AG04449 (cell line): ENCODE measurements at regions of chr1 and their contacts with region 1.

Region 1: DNA sequence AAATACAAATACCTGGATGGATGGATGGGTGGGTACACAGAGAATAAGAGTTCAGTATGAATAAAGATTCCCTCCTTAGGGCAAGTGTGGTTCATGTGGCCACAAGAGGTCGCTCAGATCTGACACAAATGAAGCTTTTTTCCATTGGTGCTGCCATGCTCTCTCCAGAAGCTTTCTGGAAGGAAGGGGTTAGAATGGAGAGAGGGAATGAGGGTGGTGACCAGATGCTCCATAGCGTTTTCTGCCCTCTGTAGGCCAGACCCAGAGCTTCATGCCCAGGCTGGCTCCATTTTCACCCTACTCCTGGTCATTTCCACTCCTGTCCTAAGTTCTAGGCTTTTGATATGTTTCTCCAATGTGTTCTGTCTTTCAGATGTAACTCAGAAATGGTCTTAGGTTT is 3.3 kb upstream of the FCRL6 start:
- DNase-seq: no peak
- H3K4me3 ChIP-seq: no peak overlapping the region
- CTCF ChIP-seq: peak; percentile 55

Region 2: GRCh38 chr1:159161001-159161718 is 637.7 kb before region 1 on chr1:
- CTCF ChIA-PET with region 1: interaction called, 21 read pairs
- POLR2A ChIA-PET with region 1: no interaction called
- DNase-seq: peak; percentile 63
- H3K4me3 ChIP-seq: peak overlapping the region; percentile 28; the same call in 1 of the 2 replicates
- CTCF ChIP-seq: peak; percentile 96

Region 3: DNA sequence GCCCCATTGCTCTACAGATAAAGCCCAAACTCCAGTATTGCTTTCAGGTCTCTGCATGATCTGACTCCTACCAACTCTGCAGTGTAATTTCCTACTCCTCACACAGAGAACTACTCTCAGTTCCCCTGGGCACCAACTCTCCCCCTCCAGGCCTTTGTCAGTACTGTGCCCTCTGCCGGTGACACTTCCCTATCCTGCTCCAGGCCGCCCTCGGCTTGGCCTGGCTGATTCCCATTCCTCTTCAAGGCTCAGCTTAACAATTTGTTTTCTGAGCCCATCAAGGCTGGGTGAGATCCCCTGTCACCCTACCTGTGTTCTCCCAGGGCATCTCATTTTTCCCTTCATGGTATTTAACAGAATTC is 30.4 kb after region 1 on chr1:
- CTCF ChIA-PET with region 1: interaction called, 143 read pairs
- POLR2A ChIA-PET with region 1: no interaction called
- DNase-seq: no peak
- H3K4me3 ChIP-seq: no peak overlapping the region
- CTCF ChIP-seq: peak; percentile 19

Region 4: DNA sequence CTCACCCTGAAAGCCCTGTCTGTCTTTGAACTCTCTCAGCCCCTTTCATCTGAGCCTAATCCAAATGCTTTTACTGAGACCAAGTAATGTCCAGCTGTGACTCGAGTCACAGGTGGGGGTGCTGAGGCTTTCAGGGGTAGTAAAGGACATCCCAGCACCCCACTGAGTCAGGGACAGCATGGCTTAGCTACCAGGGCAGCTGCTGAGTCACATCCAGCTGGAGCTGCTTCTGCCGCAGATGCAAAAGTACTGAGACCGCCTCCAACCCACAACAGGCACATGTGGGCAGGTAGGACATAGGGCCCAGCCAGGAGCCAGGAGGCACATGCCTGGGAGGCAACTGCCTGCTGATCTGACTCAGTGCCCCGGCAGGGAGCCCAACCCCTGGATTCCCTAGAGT is 70.3 kb after region 1 on chr1:
- CTCF ChIA-PET with region 1: interaction called, 22 read pairs
- POLR2A ChIA-PET with region 1: interaction called, 3 read pairs
- DNase-seq: no peak
- H3K4me3 ChIP-seq: no peak overlapping the region
- CTCF ChIP-seq: no peak

Region 5: DNA sequence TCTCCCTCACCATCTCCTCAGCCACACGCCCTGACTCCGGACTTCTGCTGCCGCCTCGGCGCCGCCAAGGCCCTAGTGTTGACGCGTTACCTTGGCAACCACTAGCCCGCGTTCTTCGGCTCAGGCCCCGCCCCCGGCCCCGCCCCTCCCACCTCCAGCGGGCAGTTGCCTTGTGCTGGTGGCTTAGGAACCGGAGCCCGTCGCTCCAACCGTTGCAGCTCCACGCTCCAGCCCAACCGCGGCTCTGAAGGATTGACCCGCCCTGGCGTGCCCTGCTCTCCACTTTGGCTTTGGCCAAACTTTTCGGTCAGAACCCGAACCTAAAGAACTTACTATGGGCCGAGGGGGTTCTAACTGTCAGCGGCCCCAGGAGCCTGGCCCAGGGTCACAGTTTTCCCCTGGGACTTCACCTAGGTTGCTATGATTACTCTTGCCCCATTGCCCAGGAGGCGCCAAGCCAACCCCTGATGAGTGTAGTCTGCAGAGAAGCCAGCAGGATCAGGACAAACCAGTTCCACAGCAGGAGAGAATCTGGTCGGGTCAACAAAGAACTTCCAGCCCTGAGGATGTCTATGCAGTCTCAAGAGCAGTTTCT is 101.3 kb after region 1 on chr1 and contains the start of gene CFAP45:
- CTCF ChIA-PET with region 1: interaction called, 1,007 read pairs
- POLR2A ChIA-PET with region 1: no interaction called
- DNase-seq: no peak
- H3K4me3 ChIP-seq: no peak within 1 kb of the TSS
- CTCF ChIP-seq: no peak

Region 6: DNA sequence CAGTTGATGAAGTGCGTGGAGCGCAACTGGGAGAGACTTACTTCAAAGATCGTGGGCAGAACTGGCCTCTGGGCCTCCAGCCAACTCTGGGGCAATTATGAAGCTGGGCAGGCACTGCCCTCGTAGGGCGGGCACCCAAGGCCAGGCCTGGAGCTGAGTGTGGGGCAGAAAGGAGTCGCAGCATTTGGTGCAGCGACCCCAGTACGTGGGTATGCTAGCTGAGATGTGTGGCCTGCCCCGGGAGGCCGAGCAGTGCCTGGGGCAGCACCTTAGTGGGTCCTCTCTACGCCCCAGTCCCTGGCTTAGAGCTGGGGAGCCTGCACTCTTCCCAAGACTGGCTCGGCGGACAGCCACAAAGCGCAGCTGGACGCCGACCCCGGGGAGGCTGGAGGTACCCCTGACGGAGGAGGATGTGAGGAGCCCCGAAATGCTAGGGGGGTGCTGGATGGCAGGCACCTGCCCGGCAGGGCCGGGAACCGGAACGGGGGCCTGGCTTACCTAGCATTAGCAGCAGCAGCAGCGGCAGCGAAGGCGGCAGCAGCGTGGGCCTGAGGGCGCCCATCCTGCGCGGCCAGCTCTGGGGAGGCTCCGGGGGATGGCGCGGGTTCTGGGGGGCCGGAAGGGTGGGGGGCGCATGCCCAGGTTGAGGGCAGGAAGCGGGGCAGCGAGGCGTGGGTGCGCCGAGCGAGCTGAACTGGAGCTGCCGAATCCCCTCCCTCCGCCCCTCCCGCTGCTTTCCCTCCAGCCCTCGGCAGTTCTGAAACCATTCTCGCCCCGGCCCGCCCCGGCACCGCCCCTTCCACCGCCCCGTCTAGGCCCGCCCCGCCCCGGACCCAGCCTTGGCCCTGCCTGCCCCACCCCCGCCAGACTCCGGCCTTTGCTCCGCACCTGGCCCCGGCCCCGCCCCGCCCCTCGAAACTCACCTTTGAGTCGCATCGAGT is 299.3 kb after region 1 on chr1 and contains the start of gene IGSF8:
- CTCF ChIA-PET with region 1: no interaction called
- POLR2A ChIA-PET with region 1: no interaction called
- DNase-seq: no peak
- H3K4me3 ChIP-seq: peak within 1 kb of the TSS; percentile 72
- CTCF ChIP-seq: no peak